Sigmoid colon (tissue), 7 donors: ENCODE measurements at regions of chr20 and their contacts with region 1.

Region 1: GRCh38 chr20:62668441-62669027 is 26.2 kb downstream of the SLCO4A1 start:
- DNase-seq: peak; percentile 90
- H3K4me3 ChIP-seq: no peak overlapping the region
- H3K27ac ChIP-seq: no peak overlapping the region
- H3K4me1 ChIP-seq: peaks cover 0 to 5% (median 2%) of the 10 kb centered on the region in 4 donors
- H3K27me3 ChIP-seq: no peaks in the 10 kb centered on the region
- CTCF ChIP-seq: peak; percentile 89 to 96 (median 92)
- EP300 ChIP-seq: no peak
- POLR2A ChIP-seq: no peak

Region 2: GRCh38 chr20:62702886-62703854 is 34.6 kb after region 1 on chr20:
- intact Hi-C with region 1: loop called (anchors 2 kb)
- DNase-seq: peak; percentile 83
- H3K4me3 ChIP-seq: no peak overlapping the region
- H3K27ac ChIP-seq: peak overlapping the region in 3 of 4 donors; percentile 59 to 82 (median 80)
- H3K4me1 ChIP-seq: peaks cover 4 to 39% (median 29%) of the 10 kb centered on the region in 4 donors
- H3K27me3 ChIP-seq: peaks cover under 1 to 7% (median 3%) of the 10 kb centered on the region in 3 donors
- CTCF ChIP-seq: peak; percentile 33 to 73 (median 48)
- EP300 ChIP-seq: no peak
- POLR2A ChIP-seq: no peak

Region 3: GRCh38 chr20:62734881-62735821 is 66.6 kb after region 1 on chr20:
- intact Hi-C with region 1: no loop called
- DNase-seq: no peak
- H3K4me3 ChIP-seq: no peak overlapping the region
- H3K27ac ChIP-seq: no peak overlapping the region
- H3K4me1 ChIP-seq: peaks cover 0 to 68% (median 26%) of the 10 kb centered on the region in 4 donors
- H3K27me3 ChIP-seq: peaks cover 0 to 2% (median 0%) of the 10 kb centered on the region in 3 donors
- CTCF ChIP-seq: no peak
- EP300 ChIP-seq: no peak
- POLR2A ChIP-seq: no peak

Region 4: GRCh38 chr20:62808211-62808865 is 139.8 kb after region 1 on chr20:
- intact Hi-C with region 1: loop called (anchors 1 kb)
- DNase-seq: no peak
- H3K4me3 ChIP-seq: no peak overlapping the region
- H3K27ac ChIP-seq: no peak overlapping the region
- H3K4me1 ChIP-seq: peaks cover 0 to 35% (median 34%) of the 10 kb centered on the region in 4 donors
- H3K27me3 ChIP-seq: no peaks in the 10 kb centered on the region
- CTCF ChIP-seq: peak; percentile 63 to 98 (median 87)
- EP300 ChIP-seq: no peak
- POLR2A ChIP-seq: no peak